Gastrocnemius medialis (tissue), 4 donors: ENCODE measurements at regions of chr2 and their contacts with region 1.

Region 1: DNA sequence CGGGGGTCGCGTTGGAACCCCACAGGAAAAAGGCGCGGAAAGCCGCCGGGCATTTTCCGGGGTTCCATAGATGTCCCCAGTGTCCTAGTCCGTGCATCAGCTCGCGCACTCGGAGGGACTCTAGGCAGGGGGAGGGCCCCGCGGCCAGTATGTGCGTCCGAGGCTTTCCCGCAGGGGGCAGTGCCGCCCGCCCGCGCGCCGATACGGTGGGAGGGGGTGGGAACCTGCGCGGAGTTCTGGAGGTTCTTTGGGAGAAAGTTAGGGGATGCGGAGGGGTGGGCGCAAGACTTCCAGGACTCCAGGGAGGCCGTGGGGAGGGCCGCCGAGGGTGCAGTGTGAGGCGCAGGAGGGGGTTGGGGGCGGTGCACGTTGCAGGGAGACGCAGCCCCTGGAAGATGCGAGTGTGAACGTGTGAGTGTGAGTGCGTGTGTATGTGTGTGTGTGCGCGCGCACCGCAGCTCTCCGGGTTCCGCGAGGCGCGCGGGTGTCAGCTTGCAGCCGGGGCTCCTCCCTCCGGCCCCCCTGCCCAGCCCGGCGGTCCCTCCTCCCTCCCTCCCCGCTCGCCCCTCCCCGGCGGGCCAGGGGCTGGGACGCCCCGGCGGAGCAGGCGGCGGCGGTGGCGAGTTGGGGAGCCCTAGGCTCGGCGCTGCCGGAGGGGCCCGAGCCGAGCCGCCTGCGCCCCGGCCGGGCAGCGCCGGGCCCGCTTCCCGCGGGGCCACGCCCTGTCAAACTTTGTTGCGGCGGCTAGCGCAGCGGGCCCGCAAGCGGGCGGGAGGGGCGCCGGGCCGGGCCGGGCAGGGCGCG is at the start of gene TCF7L1:
- DNase-seq: peak; percentile 67 to 77
- ATAC-seq: peak; percentile 82 to 84
- H3K4me3 ChIP-seq: peak within 1 kb of the TSS; percentile 69 to 94 (median 80)
- H3K27ac ChIP-seq: peak within 1 kb of the TSS; percentile 74 to 83 (median 76)
- H3K4me1 ChIP-seq: peaks cover 13 to 29% of the 10 kb centered on the region in 2 donors
- H3K27me3 ChIP-seq: no peaks in the 10 kb centered on the region
- CTCF ChIP-seq: peak; percentile 86 to 98 (median 91)
- POLR2A ChIP-seq: peak; percentile 57 to 68
- total RNA-seq, gene TCF7L1: 1.1 to 3.9 (median 2.8) TPM

Region 2: GRCh38 chr2:84925724-84926376 is 207.2 kb before region 1 on chr2:
- in situ Hi-C with region 1: no loop called
- intact Hi-C with region 1: loop called (anchors 5 kb)
- DNase-seq: peak; percentile 79 to 93
- ATAC-seq: peak; percentile 76 to 86
- H3K4me3 ChIP-seq: peak overlapping the region; percentile 34 to 60 (median 38)
- H3K27ac ChIP-seq: peak overlapping the region in 3 of 4 donors; percentile 53 to 65 (median 54)
- H3K4me1 ChIP-seq: no peaks in the 10 kb centered on the region
- H3K27me3 ChIP-seq: no peaks in the 10 kb centered on the region
- CTCF ChIP-seq: peak; percentile 90 to 98 (median 96)
- POLR2A ChIP-seq: no peak

Region 3: DNA sequence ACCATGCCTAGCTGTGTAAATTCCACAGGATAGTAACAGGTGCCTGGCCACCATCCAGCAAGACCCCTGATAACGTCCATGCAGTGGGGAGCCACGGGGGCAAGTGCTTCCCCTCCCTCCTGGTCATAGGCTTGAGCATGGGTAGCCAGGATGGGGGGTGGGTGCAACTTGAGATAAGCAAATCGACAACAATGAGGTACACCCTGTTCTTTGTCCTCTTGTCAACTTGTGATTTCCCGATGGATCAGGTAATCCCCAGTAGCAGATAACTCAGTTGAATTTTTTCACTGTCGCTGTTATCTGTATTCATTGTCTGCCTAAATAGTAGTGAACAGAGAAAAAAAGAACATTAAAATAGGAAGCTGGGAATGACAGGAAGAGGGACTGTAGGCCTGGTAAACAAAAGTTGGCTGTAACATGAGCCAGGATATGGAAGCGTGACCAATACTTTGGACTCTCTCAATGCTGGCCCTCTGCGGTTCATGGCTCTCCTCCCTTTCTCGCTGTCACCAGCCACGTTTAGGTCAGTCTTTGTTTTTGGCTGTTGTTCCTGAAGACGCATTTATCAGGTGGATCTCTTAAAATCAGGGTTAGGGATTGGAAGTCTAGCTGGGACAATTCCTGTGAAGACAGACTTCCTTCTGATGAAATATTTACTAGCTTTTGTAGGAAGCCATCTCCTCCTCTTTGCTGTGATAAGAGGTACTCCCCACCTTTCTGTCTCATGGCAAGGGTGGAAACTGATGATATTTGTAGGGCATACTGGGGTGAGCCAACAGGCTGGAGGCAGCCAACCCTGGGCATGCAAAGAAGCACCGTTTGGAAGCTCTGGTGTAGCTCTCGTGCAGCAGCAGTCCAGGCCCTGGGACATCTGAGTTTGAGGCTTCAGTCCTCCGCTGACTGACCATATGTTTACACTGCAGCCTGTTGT is 42.6 kb after region 1 on chr2:
- in situ Hi-C with region 1: no loop called
- intact Hi-C with region 1: loop called (anchors 5 kb)
- DNase-seq: peak; percentile 77 to 82
- ATAC-seq: peak; percentile 79 to 84
- H3K4me3 ChIP-seq: peak overlapping the region in 3 of 4 donors; percentile 10 to 29 (median 18)
- H3K27ac ChIP-seq: peak overlapping the region; percentile 90 to 96 (median 92)
- H3K4me1 ChIP-seq: peaks cover 57 to 70% of the 10 kb centered on the region in 2 donors
- H3K27me3 ChIP-seq: no peaks in the 10 kb centered on the region
- CTCF ChIP-seq: no peak
- POLR2A ChIP-seq: peak in 1 of 2 donors; percentile 29

Region 4: DNA sequence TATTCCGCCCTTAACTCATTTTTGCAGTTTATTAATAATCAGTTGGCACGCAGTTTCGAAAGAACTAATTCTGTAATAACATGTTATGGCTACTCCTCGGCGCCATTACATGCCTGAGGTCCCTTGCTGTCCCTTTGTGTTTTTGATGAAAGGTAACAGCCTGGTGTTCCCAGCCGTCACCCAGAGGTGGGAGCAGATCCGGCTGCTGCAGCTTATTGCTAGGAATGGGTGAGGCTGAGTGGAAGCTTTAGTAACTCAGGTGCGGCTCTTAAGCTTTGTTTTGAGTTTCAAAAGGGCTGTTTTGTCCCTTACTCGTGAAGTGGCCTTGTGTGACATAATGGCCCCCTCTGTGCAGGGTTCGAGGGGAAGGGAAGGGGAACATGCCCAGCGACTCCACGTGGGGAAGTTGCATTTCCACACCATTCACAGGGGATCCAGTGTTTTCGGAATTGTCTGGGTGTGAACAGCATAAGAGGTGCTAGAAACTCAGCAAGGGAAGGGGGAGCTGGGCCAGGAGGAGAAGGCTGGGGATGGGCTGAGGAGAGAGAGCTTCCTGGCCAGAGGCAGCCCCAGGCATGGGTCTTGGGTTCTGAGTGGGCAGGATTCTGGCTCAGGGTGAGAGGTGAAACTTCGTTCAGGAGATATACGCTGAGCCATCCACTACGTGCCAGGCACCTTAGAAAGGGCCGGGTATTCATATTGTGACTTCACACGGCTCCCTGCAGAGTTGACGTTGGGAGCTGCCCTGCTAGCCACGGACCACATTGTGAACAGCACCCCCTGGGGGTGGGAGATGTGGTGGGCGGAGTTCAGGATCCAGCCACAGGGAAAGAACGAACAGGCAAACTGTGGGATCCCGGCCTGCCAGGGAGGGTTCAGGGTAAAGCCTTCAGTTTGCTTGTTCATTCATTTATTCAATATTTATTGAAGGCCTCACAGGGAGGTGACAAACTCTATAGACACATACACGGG is 110.4 kb after region 1 on chr2:
- in situ Hi-C with region 1: no loop called
- intact Hi-C with region 1: loop called (anchors 1 kb)
- DNase-seq: peak; percentile 28 to 63
- ATAC-seq: peak; percentile 68 to 86
- H3K4me3 ChIP-seq: no peak overlapping the region
- H3K27ac ChIP-seq: no peak overlapping the region
- H3K4me1 ChIP-seq: peaks cover 6 to 10% of the 10 kb centered on the region in 2 donors
- H3K27me3 ChIP-seq: no peaks in the 10 kb centered on the region
- CTCF ChIP-seq: peak; percentile 61 to 78 (median 74)
- POLR2A ChIP-seq: no peak

Region 5: GRCh38 chr2:85288244-85288725 is 155.2 kb after region 1 on chr2:
- in situ Hi-C with region 1: loop called in 3 of 4 experiments (anchors 5 to 10 kb)
- intact Hi-C with region 1: loop called (anchors 1 kb)
- DNase-seq: no peak
- ATAC-seq: no peak
- H3K4me3 ChIP-seq: no peak overlapping the region
- H3K27ac ChIP-seq: no peak overlapping the region
- H3K4me1 ChIP-seq: no peaks in the 10 kb centered on the region
- H3K27me3 ChIP-seq: no peaks in the 10 kb centered on the region
- CTCF ChIP-seq: no peak
- POLR2A ChIP-seq: no peak